Activated naive CD4-positive, alpha-beta T cell treated with anti-CD3 and anti-CD28 coated beads, Interleukin-2, amount 10 ng/mL, durations not matched to agents 7 days and 5 days (primary cell): ENCODE measurements at regions of chr2 and their contacts with region 1.

Region 1: GRCh38 chr2:118061135-118061955 is 26.9 kb upstream of the INSIG2 start:
- DNase-seq: no peak
- H3K4me3 Mint-ChIP-seq: no peak overlapping the region
- H3K27ac Mint-ChIP-seq: no peak overlapping the region
- H3K4me1 Mint-ChIP-seq: peaks cover 5% of the 10 kb centered on the region
- H3K27me3 Mint-ChIP-seq: peaks cover 27% of the 10 kb centered on the region

Region 2: GRCh38 chr2:118046634-118047210 is 14.6 kb before region 1 on chr2:
- CTCF ChIA-PET with region 1: interaction called, 14 read pairs
- DNase-seq: no peak
- H3K4me3 Mint-ChIP-seq: no peak overlapping the region
- H3K27ac Mint-ChIP-seq: no peak overlapping the region
- H3K4me1 Mint-ChIP-seq: no peaks in the 10 kb centered on the region
- H3K27me3 Mint-ChIP-seq: peaks cover 34% of the 10 kb centered on the region